ENCODE measurements at regions of chr20 and their contacts with region 1.

Region 1: DNA sequence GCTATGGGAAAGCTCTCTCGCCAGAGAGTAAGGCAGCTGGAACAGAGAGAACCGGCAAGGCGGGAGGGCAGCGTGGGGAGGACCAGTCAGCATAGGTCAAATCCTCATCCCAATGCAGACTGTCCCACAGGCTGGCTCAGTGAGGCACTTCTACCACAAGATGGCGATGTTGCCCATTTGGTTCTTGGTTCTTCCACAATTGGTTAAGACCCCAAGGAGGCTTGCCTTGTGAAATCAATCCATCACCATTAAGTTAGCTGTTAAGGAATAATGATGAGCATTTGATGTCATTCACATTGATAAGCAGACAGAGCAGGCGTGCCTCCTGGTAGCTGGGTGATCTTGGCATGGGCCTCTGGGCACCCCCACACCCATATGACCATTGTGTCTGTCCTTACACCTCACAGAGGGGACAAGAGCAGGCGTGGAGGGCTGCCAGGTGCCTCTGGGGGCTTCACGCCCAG is 2.4 kb downstream of the CSTL1 start:
- DNase-seq: peak; percentile 47 to 70 (median 61)
- H3K4me3 ChIP-seq: no peak overlapping the region
- H3K27ac ChIP-seq: no peak overlapping the region
- H3K4me1 ChIP-seq: no peaks in the 10 kb centered on the region
- H3K27me3 ChIP-seq: no peaks in the 10 kb centered on the region
- CTCF ChIP-seq: peak; percentile 52 to 61 (median 58)
- EP300 ChIP-seq: no peak
- POLR2A ChIP-seq: no peak

Region 2: DNA sequence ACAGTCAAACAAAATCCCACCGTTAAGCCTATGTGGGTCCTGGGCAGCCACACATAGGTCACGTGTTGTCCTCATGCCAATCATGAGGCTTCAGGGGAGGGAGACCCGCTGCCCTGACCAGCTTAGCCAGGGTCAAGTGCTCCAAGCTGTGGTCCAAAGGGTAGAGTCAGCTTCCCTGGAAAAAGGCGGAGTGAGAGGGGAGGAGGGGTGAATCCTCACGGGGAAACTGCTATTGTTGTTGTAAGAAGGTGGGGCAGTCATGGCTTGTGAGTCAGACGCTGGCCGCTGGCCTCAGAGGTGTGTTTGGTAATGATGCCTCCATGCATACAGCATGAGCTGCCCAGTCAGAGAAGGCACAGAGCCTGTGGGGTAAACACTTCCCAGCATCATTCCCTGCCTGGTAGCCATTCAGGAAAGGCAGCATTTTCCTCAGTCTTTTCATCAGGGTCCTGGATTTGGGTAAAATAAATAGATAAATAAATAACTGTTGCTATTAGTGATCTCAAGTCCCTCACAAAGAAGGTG is 187.2 kb after region 1 on chr20:
- intact Hi-C with region 1: no loop called
- DNase-seq: peak in 1 of 5 donors; percentile 55
- H3K4me3 ChIP-seq: no peak overlapping the region
- H3K27ac ChIP-seq: no peak overlapping the region
- H3K4me1 ChIP-seq: peaks cover 7% of the 10 kb centered on the region
- H3K27me3 ChIP-seq: no peaks in the 10 kb centered on the region
- CTCF ChIP-seq: no peak
- EP300 ChIP-seq: no peak
- POLR2A ChIP-seq: no peak

Region 3: DNA sequence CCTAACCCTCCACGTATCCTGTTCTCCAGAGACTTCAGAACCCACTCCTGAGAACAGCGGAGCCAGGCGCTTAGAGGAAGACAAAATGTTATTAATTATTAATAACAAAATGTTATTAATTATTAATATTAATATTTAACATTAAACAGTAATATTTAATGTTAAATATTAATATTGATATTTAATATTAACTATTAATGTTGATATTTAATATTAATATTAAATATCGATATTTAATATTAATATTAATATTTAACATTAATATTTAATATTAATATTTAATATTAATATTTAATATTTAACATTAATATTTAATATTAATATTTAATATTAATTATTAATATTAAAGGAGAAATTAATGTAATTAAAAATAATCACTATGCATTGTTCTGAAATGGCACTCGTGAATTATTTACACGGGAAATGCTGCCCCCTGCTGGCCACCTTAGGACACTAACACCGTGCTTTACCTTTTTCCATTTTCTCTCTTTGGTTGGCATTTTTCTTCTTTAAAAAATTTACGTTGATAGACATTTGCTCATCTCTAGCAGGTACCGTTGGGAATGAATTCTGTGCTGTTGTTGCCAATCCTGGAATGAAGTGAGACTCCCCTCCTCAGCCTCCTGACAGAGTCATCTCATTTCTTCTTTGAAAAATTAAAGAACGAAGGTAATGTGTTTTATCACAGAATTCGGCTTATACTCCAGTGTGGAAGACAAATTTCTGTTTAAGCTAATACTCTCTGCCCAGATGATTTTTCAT is 554.2 kb after region 1 on chr20:
- intact Hi-C with region 1: loop called in 2 of 4 experiments (anchors 5 to 10 kb)
- DNase-seq: peak; percentile 35 to 67 (median 62)
- H3K4me3 ChIP-seq: no peak overlapping the region
- H3K27ac ChIP-seq: no peak overlapping the region
- H3K4me1 ChIP-seq: no peaks in the 10 kb centered on the region
- H3K27me3 ChIP-seq: no peaks in the 10 kb centered on the region
- CTCF ChIP-seq: peak; percentile 28 to 49 (median 33)
- EP300 ChIP-seq: no peak
- POLR2A ChIP-seq: no peak

Measured in ovary (tissue), 10 donors.